Psoas muscle (tissue), 8 donors: ENCODE measurements at regions of chr5 and their contacts with region 1.

Region 1: GRCh38 chr5:135289651-135290050 is 109.4 kb downstream of the MACROH2A1 start:
- DNase-seq: no peak
- ATAC-seq: no peak
- H3K4me3 ChIP-seq: no peak overlapping the region
- H3K27ac ChIP-seq: no peak overlapping the region
- H3K4me1 ChIP-seq: no peaks in the 10 kb centered on the region
- H3K27me3 ChIP-seq: no peaks in the 10 kb centered on the region
- CTCF ChIP-seq: no peak

Region 2: GRCh38 chr5:135208903-135209721 is 80.5 kb before region 1 on chr5:
- intact Hi-C with region 1: loop called in 1 of 2 experiments (anchors 10 kb)
- DNase-seq: peak; percentile 45 to 67
- ATAC-seq: peak; percentile 76 to 85 (median 79)
- H3K4me3 ChIP-seq: no peak overlapping the region
- H3K27ac ChIP-seq: peak overlapping the region; percentile 75
- H3K4me1 ChIP-seq: peaks cover 38% of the 10 kb centered on the region
- H3K27me3 ChIP-seq: no peaks in the 10 kb centered on the region
- CTCF ChIP-seq: no peak

Region 3: DNA sequence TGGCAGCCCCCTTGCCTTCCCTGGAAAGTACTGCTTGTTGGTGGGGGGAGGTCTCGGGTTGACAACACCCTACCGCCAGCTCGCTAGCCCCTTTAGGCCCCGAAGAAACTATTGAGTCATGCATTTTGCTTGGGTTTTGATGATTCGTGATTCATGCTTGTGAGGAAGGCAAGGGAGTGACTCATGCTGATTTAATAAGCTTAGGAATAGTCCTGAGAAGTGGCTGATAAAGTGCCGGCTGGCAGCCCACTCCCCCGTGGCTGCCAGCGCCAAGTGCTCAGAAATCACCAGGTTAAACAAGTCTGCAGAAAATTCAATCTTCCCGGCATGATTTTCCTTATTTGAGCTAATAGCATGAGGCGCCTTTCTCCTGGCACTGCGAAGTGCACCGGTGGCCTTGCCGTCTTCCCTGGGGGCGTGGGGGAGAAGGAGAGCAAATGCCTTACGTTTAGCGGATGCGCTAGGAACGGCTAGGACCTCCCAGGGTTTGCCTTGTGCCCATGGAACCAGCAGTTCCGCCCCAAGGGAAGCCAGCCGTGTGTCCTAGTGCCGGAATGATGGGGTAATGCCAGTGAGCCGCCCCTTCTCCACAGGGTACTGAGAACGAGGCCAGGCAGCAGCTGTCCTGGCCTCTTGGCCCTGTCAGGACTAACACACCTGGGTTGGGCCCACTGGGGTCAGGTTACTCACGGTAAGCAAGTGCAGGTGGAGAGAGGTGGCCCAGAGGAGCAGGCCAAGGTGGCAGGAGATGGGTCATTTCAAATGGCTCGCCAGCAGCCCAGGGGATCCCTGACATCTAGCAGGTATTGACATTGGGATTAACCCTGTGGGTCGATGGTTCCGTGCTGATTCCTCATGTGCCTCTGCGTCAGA is 42.5 kb before region 1 on chr5:
- intact Hi-C with region 1: no loop called
- DNase-seq: no peak
- ATAC-seq: peak in 3 of 4 donors; percentile 12 to 35 (median 27)
- H3K4me3 ChIP-seq: no peak overlapping the region
- H3K27ac ChIP-seq: peak overlapping the region; percentile 90
- H3K4me1 ChIP-seq: peaks cover 49% of the 10 kb centered on the region
- H3K27me3 ChIP-seq: no peaks in the 10 kb centered on the region
- CTCF ChIP-seq: no peak

Region 4: DNA sequence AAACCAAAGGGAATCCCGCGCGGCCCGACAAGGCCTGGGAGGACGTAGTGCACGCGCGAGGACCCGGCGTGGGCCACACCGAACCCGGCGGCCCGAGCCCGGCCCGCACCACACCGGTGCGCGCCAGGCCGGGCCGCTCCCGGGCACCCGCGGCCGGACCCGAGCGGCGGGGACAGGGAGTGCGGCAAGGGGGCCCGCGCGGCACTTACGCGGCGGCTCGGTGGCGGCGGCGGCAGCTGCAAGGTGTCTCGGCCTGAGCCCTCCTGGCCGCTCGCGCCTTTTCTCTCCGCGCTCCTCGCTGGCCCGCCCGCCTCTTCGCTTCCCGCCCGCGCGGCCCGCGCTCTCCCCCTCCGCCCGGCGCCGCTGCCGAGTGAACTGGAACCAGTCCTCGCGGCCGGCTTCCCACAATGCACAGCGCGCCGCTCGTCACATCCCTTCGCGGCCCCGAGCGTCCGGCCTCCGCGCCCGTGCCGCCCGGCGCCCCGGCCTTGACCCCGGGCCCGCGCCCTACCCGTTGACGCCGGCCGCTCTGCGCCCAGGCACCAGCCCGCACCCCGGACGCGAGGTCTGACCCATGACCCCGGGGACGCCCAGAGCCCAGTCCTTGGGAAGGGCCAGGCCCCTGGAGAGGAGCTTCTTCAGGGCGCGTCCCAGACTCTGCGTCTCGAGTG is 109.3 kb after region 1 on chr5 and contains the start of gene MACROH2A1:
- intact Hi-C with region 1: no loop called
- DNase-seq: peak; percentile 94 to 95
- ATAC-seq: peak; percentile 90 to 93 (median 92)
- H3K4me3 ChIP-seq: peak within 1 kb of the TSS; percentile 86
- H3K27ac ChIP-seq: peak within 1 kb of the TSS; percentile 95
- H3K4me1 ChIP-seq: peaks cover 39% of the 10 kb centered on the region
- H3K27me3 ChIP-seq: no peaks in the 10 kb centered on the region
- CTCF ChIP-seq: no peak
- total RNA-seq, gene MACROH2A1: 57.8 to 108 (median 81.5) TPM